GM12878 (cell line): ENCODE measurements at regions of chr4 and their contacts with region 1.

Region 1: DNA sequence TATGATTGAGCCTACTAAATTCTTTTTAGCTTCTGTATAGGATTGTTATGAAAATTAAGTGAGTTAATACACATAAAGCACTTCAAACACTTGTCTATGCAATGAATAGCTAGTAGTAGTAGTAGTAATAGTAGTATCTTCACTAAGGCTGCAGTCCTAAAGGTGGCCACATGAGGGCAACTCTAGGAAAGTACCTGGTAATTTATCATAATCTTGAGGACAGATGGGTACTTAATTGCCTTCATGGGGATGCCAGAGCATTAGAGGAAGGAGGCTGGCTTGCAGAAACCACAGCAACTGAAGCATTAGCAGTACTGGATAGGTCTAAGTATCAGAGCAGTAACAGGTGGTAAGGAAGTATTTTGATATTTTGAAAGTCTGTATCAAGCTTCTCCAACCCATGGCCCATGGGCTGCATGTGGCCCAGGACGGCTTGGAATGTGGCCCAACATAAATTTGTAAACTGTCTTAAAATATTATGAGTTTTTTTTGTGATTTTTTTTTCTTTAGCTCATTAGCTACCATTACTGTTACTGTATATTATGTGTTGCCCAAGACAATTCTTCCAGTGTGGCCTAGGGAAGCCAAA is 17.3 kb downstream of the NIPAL1 start:
- DNase-seq: no peak
- ATAC-seq: peak; percentile 74
- H3K4me3 ChIP-seq: no peak overlapping the region
- H3K27ac ChIP-seq: peak overlapping the region; percentile 20; the same call in 1 of the 2 replicates
- H3K4me1 ChIP-seq: peaks cover 48% of the 10 kb centered on the region
- H3K27me3 ChIP-seq: no peaks in the 10 kb centered on the region
- CTCF ChIP-seq: peak; percentile 45 to 63 (median 60)
- EP300 ChIP-seq: no peak
- POLR2A ChIP-seq: no peak
- RAD21 ChIP-seq: peak; percentile 56

Region 2: GRCh38 chr4:47990145-47990544 is 43.8 kb before region 1 on chr4:
- CTCF ChIA-PET with region 1: no interaction called
- POLR2A ChIA-PET with region 1: no interaction called
- RAD21 ChIA-PET with region 1: no interaction called
- SMC1A ChIA-PET with region 1: no interaction called
- in situ Hi-C with region 1: no loop called
- intact Hi-C with region 1: no loop called
- DNase-seq: no peak
- ATAC-seq: no peak
- H3K4me3 ChIP-seq: no peak overlapping the region
- H3K27ac ChIP-seq: no peak overlapping the region
- H3K4me1 ChIP-seq: no peaks in the 10 kb centered on the region
- H3K27me3 ChIP-seq: no peaks in the 10 kb centered on the region
- CTCF ChIP-seq: no peak
- EP300 ChIP-seq: no peak
- POLR2A ChIP-seq: no peak
- RAD21 ChIP-seq: no peak

Region 3: DNA sequence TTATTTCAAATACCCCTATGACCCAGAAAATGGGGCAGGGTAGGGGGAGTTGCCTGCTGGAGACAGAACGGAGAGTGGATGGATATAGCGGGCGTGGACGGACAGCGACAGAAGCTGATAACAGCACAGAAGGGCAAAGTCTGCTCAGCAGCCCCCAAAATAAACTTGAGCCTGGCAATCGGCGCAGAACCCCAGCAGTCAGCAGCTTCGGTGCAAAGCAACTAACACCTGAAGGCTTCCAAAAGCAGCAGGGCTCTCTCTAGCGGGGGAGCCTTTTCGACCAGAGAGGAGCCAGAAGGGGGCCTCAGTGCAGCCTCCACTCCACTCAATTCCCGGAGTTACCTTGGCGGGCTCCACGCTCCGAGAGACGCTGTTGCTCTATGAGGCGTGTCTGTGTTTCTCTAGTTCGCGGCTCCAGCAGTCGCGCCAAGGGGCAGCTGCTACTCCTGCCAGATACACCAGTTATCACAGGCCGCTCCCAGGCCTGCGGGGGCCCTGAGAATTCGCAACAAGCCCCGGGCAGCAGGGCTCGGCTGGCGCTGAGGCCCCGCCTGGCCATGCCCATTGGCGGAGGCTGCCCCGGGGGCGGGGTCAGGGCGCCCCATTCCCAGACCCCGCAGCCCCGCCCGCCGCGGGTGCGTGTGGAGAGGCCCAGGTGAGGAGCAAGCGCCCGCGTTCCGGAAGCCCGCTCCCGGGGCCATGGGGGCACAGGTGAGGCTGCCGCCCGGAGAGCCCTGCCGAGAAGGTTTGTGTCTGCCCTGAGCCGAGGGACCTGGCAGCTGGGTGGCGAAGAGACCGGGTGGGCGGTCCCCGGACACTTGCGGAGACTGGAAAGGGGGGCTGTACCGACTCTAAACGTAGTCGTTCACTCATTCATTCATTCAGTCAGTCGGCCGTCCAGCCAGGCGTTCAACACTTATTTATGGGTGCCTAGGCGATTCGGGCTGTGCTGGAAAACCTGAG is 17.5 kb before region 1 on chr4 and contains the starts of genes CNGA1 and NIPAL1:
- CTCF ChIA-PET with region 1: interaction called, 21 read pairs
- POLR2A ChIA-PET with region 1: interaction called, 7 read pairs
- RAD21 ChIA-PET with region 1: interaction called, 3 read pairs
- SMC1A ChIA-PET with region 1: interaction called, 19 read pairs
- in situ Hi-C with region 1: no loop called
- intact Hi-C with region 1: no loop called
- DNase-seq: no peak
- ATAC-seq: peak; percentile 95
- H3K4me3 ChIP-seq: peak within 1 kb of the TSS; percentile 89
- H3K27ac ChIP-seq: peak within 1 kb of the TSS; percentile 30; the same call in 1 of the 2 replicates
- H3K4me1 ChIP-seq: no peaks in the 10 kb centered on the region
- H3K27me3 ChIP-seq: no peaks in the 10 kb centered on the region; a peak in 1 of 4 replicates
- CTCF ChIP-seq: peak; percentile 41 to 52 (median 48); a peak in 5 of 6 replicates
- EP300 ChIP-seq: no peak
- POLR2A ChIP-seq: peak; percentile 63
- RAD21 ChIP-seq: peak; percentile 58
- polyA plus RNA-seq, gene CNGA1: 7.9 to 8.9 TPM
- polyA plus RNA-seq, gene NIPAL1: 1.1 to 2.0 TPM

Region 4: GRCh38 chr4:48047421-48047844 is 13.5 kb after region 1 on chr4:
- CTCF ChIA-PET with region 1: interaction called, 158 read pairs
- POLR2A ChIA-PET with region 1: interaction called, 38 read pairs
- RAD21 ChIA-PET with region 1: interaction called, 121 read pairs
- SMC1A ChIA-PET with region 1: interaction called, 268 read pairs
- in situ Hi-C with region 1: no loop called
- intact Hi-C with region 1: loop called (anchors 1 kb)
- DNase-seq: peak; percentile 84
- ATAC-seq: peak; percentile 95
- H3K4me3 ChIP-seq: peak overlapping the region; percentile 18; the same call in 1 of the 2 replicates
- H3K27ac ChIP-seq: peak overlapping the region; percentile 71
- H3K4me1 ChIP-seq: peaks cover 72% of the 10 kb centered on the region
- H3K27me3 ChIP-seq: no peaks in the 10 kb centered on the region; a peak in 1 of 4 replicates
- CTCF ChIP-seq: no peak
- EP300 ChIP-seq: peak; percentile 94 to 98
- POLR2A ChIP-seq: no peak
- RAD21 ChIP-seq: peak; percentile 36; the same call in 1 of the 2 replicates

Region 5: GRCh38 chr4:48103483-48104139 is 69.7 kb after region 1 on chr4:
- CTCF ChIA-PET with region 1: interaction called, 16 read pairs
- POLR2A ChIA-PET with region 1: no interaction called
- RAD21 ChIA-PET with region 1: interaction called, 5 read pairs
- SMC1A ChIA-PET with region 1: interaction called, 21 read pairs
- in situ Hi-C with region 1: no loop called
- intact Hi-C with region 1: loop called (anchors 5 kb)
- DNase-seq: no peak
- ATAC-seq: peak; percentile 86
- H3K4me3 ChIP-seq: no peak overlapping the region
- H3K27ac ChIP-seq: no peak overlapping the region
- H3K4me1 ChIP-seq: no peaks in the 10 kb centered on the region
- H3K27me3 ChIP-seq: no peaks in the 10 kb centered on the region
- CTCF ChIP-seq: no peak
- EP300 ChIP-seq: peak; percentile 32 to 71; a peak in 1 of 4 replicates
- POLR2A ChIP-seq: no peak
- RAD21 ChIP-seq: no peak

Region 6: DNA sequence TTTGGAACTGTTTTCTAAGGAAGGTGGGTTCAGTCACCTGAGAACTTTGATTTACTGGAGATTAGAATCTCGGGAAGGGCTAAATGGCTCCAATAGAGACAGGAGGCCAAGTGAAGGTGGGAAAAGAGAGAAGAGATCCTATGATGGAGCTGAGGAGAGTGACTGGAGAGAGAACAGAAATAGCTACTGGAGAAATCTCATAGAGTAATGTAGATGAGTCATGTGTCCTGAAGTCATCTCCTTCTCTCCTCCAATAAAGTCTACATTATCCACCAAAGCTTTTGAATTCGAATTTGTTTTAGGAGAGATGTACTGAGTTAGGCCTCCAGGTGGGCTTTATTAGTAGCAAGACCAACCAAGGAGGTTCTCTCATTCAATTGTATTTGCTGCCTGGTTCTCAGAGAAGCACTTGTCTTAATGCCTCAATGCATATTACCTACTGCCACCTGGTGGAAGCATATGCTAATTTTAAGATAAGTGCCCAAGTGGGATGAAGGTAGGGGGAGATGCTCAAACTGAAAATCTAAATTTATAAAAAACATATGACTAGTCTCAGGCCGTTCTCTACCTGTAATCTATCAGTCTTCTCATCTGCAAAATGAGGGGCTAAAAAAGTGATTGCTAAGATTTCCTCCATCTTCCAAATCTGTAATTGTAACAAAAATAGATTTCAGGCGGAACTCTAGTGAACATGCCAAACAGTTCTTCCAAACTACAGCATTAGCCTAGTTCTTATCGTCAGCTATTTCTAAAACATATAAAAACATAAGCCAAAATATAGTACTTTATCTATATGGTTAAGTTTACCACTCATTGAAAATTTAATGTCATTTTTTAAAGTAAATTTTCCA is 75.7 kb after region 1 on chr4:
- CTCF ChIA-PET with region 1: interaction called, 16 read pairs
- POLR2A ChIA-PET with region 1: no interaction called
- RAD21 ChIA-PET with region 1: interaction called, 5 read pairs
- SMC1A ChIA-PET with region 1: interaction called, 21 read pairs
- in situ Hi-C with region 1: no loop called
- intact Hi-C with region 1: loop called (anchors 5 kb)
- DNase-seq: no peak
- ATAC-seq: peak; percentile 90
- H3K4me3 ChIP-seq: no peak overlapping the region
- H3K27ac ChIP-seq: no peak overlapping the region
- H3K4me1 ChIP-seq: no peaks in the 10 kb centered on the region
- H3K27me3 ChIP-seq: no peaks in the 10 kb centered on the region
- CTCF ChIP-seq: peak; percentile 57 to 64 (median 60)
- EP300 ChIP-seq: no peak
- POLR2A ChIP-seq: no peak
- RAD21 ChIP-seq: peak; percentile 74

Region 7: GRCh38 chr4:48635310-48635709 is 601.4 kb after region 1 on chr4:
- CTCF ChIA-PET with region 1: no interaction called
- POLR2A ChIA-PET with region 1: no interaction called
- RAD21 ChIA-PET with region 1: no interaction called
- SMC1A ChIA-PET with region 1: no interaction called
- in situ Hi-C with region 1: no loop called
- intact Hi-C with region 1: no loop called
- DNase-seq: no peak
- ATAC-seq: peak; percentile 74
- H3K4me3 ChIP-seq: no peak overlapping the region
- H3K27ac ChIP-seq: no peak overlapping the region
- H3K4me1 ChIP-seq: peaks cover 14% of the 10 kb centered on the region
- H3K27me3 ChIP-seq: no peaks in the 10 kb centered on the region
- CTCF ChIP-seq: no peak
- EP300 ChIP-seq: no peak
- POLR2A ChIP-seq: no peak
- RAD21 ChIP-seq: no peak